AG04450 (cell line): ENCODE measurements at regions of chr2 and their contacts with region 1.

Region 1: DNA sequence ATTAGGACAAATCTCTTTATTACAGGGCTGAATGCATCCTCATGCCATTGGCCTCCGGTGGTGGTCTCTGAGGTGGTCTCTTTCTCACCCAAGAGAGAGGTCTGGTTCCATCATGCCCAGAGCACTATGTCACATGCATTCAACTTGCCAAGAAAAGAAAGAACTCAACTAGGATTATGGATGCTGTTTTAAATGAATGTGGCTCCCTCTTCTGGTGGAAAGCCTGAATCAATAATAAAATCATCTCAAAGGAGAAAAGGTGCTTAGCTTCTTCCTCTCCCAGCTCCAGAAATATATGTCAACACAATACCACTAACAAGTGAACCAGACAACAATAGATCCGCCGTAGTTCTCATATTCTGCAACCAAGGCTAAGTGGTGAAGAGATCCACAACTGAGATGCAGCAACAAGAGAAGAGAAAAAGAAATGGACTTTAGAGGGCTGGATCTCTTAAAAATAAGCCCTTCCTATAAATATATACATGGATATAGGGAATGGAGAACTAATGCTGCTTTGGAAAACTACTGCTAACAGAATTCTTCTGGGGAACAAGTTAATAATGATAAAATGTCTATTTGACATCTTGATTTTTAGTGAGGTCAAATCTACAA is 396.8 kb downstream of the NCKAP5 start:
- DNase-seq: peak; percentile 43
- H3K4me3 ChIP-seq: no peak overlapping the region
- H3K27ac ChIP-seq: no peak overlapping the region
- H3K27me3 ChIP-seq: no peaks in the 10 kb centered on the region
- CTCF ChIP-seq: peak; percentile 74

Region 2: GRCh38 chr2:132896073-132896472 is 275.4 kb before region 1 on chr2:
- CTCF ChIA-PET with region 1: no interaction called
- POLR2A ChIA-PET with region 1: interaction called, 10 read pairs
- DNase-seq: no peak
- H3K4me3 ChIP-seq: no peak overlapping the region
- H3K27ac ChIP-seq: no peak overlapping the region
- H3K27me3 ChIP-seq: no peaks in the 10 kb centered on the region
- CTCF ChIP-seq: no peak